Heart right ventricle (tissue), 16 donors: ENCODE measurements at regions of chr18 and their contacts with region 1.

Region 1: DNA sequence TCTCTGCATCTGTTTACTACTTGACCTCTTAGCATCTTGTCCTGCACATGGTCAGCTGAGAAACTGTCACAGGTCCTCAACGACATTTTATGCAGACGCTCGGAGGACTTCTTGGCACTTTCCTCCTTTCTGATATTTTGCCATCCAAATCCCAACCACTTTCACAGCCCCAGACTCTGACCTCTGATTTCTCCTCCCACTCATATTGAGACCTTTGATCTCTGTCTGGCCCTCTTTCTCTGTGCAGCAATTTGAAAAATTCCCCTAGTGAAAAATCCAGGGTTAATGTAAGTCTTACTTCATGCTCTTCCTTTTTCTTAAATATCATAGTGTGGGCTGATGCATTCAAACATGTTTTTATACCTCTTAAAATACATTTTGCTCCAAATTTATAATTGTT is 273.8 kb downstream of the CCDC102B start:
- DNase-seq: no peak
- ATAC-seq: no peak
- H3K4me3 ChIP-seq: no peak overlapping the region
- H3K27ac ChIP-seq: no peak overlapping the region
- H3K4me1 ChIP-seq: no peaks in the 10 kb centered on the region
- H3K27me3 ChIP-seq: no peaks in the 10 kb centered on the region
- CTCF ChIP-seq: no peak

Region 2: DNA sequence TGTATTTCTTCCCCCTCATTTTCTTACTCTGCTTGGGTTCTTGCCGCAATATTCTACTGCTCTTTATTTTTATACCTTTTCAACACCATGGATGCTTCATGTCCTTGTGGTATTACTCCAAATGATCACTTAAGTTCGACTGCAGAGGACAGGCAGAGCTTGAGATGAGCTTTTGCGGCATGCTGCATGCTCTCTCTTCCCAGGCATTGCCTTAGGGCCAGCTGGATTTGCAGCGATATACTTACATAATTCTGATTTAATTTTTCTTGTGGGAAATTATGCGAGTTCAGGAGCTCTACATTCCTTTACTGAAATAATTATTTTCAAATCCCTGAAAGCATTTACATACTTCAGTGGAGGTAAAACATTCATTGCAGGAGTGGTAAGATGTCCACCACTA is 14.3 kb after region 1 on chr18:
- intact Hi-C with region 1: loop called in 1 of 10 experiments (anchors 2 kb)
- DNase-seq: no peak
- ATAC-seq: no peak
- H3K4me3 ChIP-seq: no peak overlapping the region
- H3K27ac ChIP-seq: no peak overlapping the region
- H3K4me1 ChIP-seq: no peaks in the 10 kb centered on the region
- H3K27me3 ChIP-seq: no peaks in the 10 kb centered on the region
- CTCF ChIP-seq: no peak